ENCODE measurements at regions of chr7 and their contacts with region 1.

Region 1: DNA sequence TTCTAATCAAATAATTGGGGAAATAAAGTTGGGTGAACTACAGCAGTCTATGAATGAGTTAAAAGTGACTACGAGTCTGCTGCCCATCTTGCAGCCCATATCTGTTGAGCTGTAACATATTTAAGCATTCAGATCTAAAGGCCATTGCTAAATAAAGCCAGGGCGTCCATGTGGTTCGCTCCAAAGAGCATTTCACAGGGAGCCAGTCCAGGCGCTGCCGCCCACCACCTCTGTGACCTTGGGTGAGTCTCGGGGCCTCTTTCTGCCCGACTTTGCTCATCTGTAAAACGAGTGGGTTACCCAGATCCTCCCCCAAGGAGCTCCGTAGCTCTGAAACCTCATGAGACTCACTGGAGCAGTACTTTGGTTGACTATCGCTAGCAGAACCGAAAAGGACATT is 223.1 kb downstream of the CUX1 start:
- DNase-seq: no peak
- ATAC-seq: no peak
- H3K4me3 ChIP-seq: no peak overlapping the region
- H3K4me3 Mint-ChIP-seq: no peak overlapping the region
- H3K27ac ChIP-seq: no peak overlapping the region
- H3K27ac Mint-ChIP-seq: no peak overlapping the region
- H3K4me1 ChIP-seq: peaks cover 7 to 8% of the 10 kb centered on the region in 2 donors
- H3K4me1 Mint-ChIP-seq: peaks cover 12% of the 10 kb centered on the region
- H3K27me3 ChIP-seq: peaks cover 0 to 3% (median 0%) of the 10 kb centered on the region in 4 experiments
- H3K27me3 Mint-ChIP-seq: peaks cover 3% of the 10 kb centered on the region
- CTCF ChIP-seq: no peak

Region 2: DNA sequence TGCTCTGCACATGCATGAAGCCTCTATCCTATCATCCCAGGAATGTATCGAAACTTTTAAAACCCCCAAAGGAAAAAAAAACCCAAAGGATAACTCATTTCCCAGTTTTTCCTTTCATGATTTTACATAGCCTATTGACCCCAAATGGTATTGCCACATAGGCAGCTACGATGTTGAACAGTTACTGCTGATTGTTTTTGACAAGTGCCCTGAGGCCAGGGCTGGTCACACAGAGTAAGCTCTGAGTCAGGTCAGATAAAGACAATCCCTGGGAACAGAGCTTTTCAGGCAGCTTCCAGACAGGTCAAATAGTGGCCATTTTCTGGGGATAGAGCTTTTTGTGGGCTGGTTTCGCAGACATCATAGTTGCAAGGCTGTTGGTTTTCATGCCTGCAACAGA is 463.6 kb before region 1 on chr7:
- CTCF ChIA-PET with region 1: no interaction called
- POLR2A ChIA-PET with region 1: no interaction called
- intact Hi-C with region 1: no loop called
- DNase-seq: no peak
- ATAC-seq: no peak
- H3K4me3 ChIP-seq: no peak overlapping the region
- H3K4me3 Mint-ChIP-seq: no peak overlapping the region
- H3K27ac ChIP-seq: no peak overlapping the region
- H3K27ac Mint-ChIP-seq: no peak overlapping the region
- H3K4me1 ChIP-seq: peaks cover 3 to 4% of the 10 kb centered on the region in 2 donors
- H3K4me1 Mint-ChIP-seq: peaks cover 11% of the 10 kb centered on the region
- H3K27me3 ChIP-seq: peaks cover 0 to 2% (median 0%) of the 10 kb centered on the region in 4 experiments
- H3K27me3 Mint-ChIP-seq: peaks cover 17% of the 10 kb centered on the region
- CTCF ChIP-seq: no peak

Region 3: DNA sequence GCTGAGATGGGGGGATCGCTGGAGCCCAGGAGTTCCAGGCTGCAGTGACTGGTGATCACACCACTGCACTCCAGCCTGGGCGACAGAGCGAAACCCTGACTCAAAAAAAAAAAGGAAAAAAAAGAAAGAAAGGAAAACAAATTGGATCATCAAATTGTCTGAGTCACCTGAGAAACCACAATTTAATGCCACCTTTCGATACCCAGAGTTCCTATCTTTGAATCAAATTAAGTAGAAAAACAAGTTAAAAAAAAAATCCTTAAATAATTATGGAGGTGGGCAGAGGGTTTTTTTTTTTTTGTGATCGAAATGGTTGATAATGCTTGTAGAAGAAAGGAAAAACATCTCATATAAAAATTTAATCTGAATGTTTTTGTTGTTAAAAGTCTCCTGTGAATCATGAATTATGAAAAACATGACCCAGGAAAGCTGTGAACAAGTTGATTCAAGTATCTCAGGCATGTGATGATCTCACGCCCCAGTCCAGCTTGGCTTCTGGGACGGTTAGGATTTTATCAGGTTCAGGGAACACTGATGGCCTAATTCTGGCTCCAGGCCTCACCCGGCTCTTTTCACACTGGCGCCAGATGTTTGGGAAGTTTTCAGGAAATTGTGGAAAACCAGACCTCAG is 248.4 kb before region 1 on chr7:
- CTCF ChIA-PET with region 1: no interaction called
- POLR2A ChIA-PET with region 1: interaction called, 13 read pairs
- intact Hi-C with region 1: no loop called
- DNase-seq: no peak
- ATAC-seq: no peak
- H3K4me3 ChIP-seq: no peak overlapping the region
- H3K4me3 Mint-ChIP-seq: no peak overlapping the region
- H3K27ac ChIP-seq: no peak overlapping the region
- H3K27ac Mint-ChIP-seq: no peak overlapping the region
- H3K4me1 ChIP-seq: no peaks in the 10 kb centered on the region
- H3K4me1 Mint-ChIP-seq: no peaks in the 10 kb centered on the region
- H3K27me3 ChIP-seq: no peaks in the 10 kb centered on the region
- H3K27me3 Mint-ChIP-seq: peaks cover 6% of the 10 kb centered on the region
- CTCF ChIP-seq: no peak

Region 4: DNA sequence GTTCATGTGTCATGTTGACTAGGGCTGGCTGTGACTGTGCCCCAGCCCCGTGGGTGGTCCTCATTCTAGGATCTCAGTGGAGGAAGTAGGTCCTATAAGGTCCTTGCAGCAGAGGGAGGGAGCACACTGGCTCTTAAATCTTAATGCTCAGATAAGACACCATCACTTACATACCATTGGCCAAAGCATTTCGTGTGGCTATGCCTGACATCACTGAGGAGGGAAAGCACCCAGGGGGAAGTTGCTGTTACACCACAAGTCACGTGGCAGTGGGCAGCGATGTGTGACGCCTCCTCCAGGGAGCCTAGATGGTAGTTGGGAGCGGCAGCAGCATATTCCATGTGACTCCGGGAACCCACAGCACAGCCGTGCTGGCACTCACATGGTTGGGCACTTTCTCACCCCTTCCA is 21.4 kb after region 1 on chr7:
- CTCF ChIA-PET with region 1: no interaction called
- POLR2A ChIA-PET with region 1: no interaction called
- intact Hi-C with region 1: no loop called
- DNase-seq: peak; percentile 83
- ATAC-seq: peak; percentile 93
- H3K4me3 ChIP-seq: no peak overlapping the region
- H3K4me3 Mint-ChIP-seq: peak overlapping the region; percentile 48
- H3K27ac ChIP-seq: no peak overlapping the region
- H3K27ac Mint-ChIP-seq: peak overlapping the region; percentile 88
- H3K4me1 ChIP-seq: peaks cover 11 to 16% of the 10 kb centered on the region in 2 donors
- H3K4me1 Mint-ChIP-seq: peaks cover 30% of the 10 kb centered on the region
- H3K27me3 ChIP-seq: no peaks in the 10 kb centered on the region
- H3K27me3 Mint-ChIP-seq: no peaks in the 10 kb centered on the region
- CTCF ChIP-seq: no peak

Region 5: GRCh38 chr7:102248456-102249395 is 208.2 kb after region 1 on chr7:
- CTCF ChIA-PET with region 1: no interaction called
- POLR2A ChIA-PET with region 1: no interaction called
- intact Hi-C with region 1: no loop called
- DNase-seq: no peak
- ATAC-seq: no peak
- H3K4me3 ChIP-seq: no peak overlapping the region
- H3K4me3 Mint-ChIP-seq: no peak overlapping the region
- H3K27ac ChIP-seq: no peak overlapping the region
- H3K27ac Mint-ChIP-seq: no peak overlapping the region
- H3K4me1 ChIP-seq: no peaks in the 10 kb centered on the region
- H3K4me1 Mint-ChIP-seq: peaks cover 7% of the 10 kb centered on the region
- H3K27me3 ChIP-seq: no peaks in the 10 kb centered on the region
- H3K27me3 Mint-ChIP-seq: no peaks in the 10 kb centered on the region
- CTCF ChIP-seq: no peak